ENCODE measurements at regions of chr12 and their contacts with region 1.

Region 1: GRCh38 chr12:50132505-50133135 is 20.6 kb downstream of the COX14 start:
- DNase-seq: no peak
- ATAC-seq: no peak
- H3K4me3 Mint-ChIP-seq: no peak overlapping the region
- H3K27ac Mint-ChIP-seq: peak overlapping the region; percentile 56
- H3K4me1 Mint-ChIP-seq: peaks cover 9% of the 10 kb centered on the region
- H3K27me3 Mint-ChIP-seq: no peaks in the 10 kb centered on the region

Region 2: GRCh38 chr12:50151047-50151687 is 18.5 kb after region 1 on chr12:
- CTCF ChIA-PET with region 1: interaction called, 10 read pairs
- DNase-seq: no peak
- ATAC-seq: no peak
- H3K4me3 Mint-ChIP-seq: no peak overlapping the region
- H3K27ac Mint-ChIP-seq: no peak overlapping the region
- H3K4me1 Mint-ChIP-seq: peaks cover 11% of the 10 kb centered on the region
- H3K27me3 Mint-ChIP-seq: no peaks in the 10 kb centered on the region

Measured in activated CD8-positive, alpha-beta memory T cell treated with anti-CD3 and anti-CD28 coated beads, Interleukin-2, amount 10 ng/mL, durations not matched to agents 7 days and 5 days (primary cell).